ENCODE measurements at regions of chr3 and their contacts with region 1.

Region 1: GRCh38 chr3:188749010-188749617 is 422.7 kb upstream of the TPRG1 start:
- DNase-seq: peak; percentile 56
- H3K4me3 Mint-ChIP-seq: no peak overlapping the region
- H3K27ac Mint-ChIP-seq: no peak overlapping the region
- H3K4me1 Mint-ChIP-seq: peaks cover 29% of the 10 kb centered on the region
- H3K27me3 Mint-ChIP-seq: no peaks in the 10 kb centered on the region

Region 2: GRCh38 chr3:188389711-188390342 is 359.3 kb before region 1 on chr3:
- CTCF ChIA-PET with region 1: no interaction called
- POLR2A ChIA-PET with region 1: no interaction called
- intact Hi-C with region 1: loop called (anchors 10 kb)
- DNase-seq: peak; percentile 74
- H3K4me3 Mint-ChIP-seq: no peak overlapping the region
- H3K27ac Mint-ChIP-seq: peak overlapping the region; percentile 50
- H3K4me1 Mint-ChIP-seq: peaks cover 27% of the 10 kb centered on the region
- H3K27me3 Mint-ChIP-seq: no peaks in the 10 kb centered on the region

Region 3: DNA sequence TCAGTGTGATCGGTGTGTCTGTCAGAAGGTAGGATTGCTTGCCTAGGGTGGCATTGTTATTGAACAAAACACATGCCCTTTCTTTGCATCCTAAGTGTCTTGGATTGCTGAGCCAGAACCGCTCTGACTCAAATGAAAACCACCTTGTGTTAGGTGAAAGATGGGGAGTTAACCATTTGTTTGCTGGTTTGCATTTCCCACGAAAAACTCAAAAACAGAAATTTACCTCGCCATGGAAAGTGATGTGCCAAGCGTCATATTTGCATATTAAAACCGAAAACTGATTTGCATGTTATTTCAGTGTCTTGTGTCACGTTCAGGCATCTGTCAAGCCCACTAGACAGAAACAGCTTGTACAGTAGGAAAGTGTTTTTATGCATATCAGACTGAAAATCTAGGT is 52.0 kb before region 1 on chr3:
- CTCF ChIA-PET with region 1: interaction called, 6 read pairs
- POLR2A ChIA-PET with region 1: no interaction called
- intact Hi-C with region 1: loop called (anchors 1 kb)
- DNase-seq: peak; percentile 55
- H3K4me3 Mint-ChIP-seq: no peak overlapping the region
- H3K27ac Mint-ChIP-seq: peak overlapping the region; percentile 7
- H3K4me1 Mint-ChIP-seq: peaks cover 50% of the 10 kb centered on the region
- H3K27me3 Mint-ChIP-seq: peaks cover 7% of the 10 kb centered on the region

Region 4: DNA sequence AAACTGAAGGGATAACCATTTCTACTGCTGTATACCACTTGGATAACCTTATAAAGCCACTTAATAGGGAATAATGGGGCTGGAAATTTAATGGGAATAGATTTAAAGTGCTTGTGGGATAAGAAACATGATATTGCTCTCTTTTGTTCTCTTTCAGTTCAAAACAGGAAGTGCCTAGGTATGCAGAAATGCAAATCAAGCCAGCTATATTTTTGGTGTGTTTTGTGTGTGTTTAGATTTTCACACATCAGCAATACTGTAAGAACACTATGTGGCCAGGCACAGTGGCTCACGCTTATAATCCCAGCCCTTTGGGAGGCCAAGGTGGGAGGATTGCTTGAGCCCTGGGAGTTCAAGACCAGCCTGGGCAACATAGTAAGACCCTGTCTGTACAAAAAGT is 19.7 kb before region 1 on chr3:
- CTCF ChIA-PET with region 1: interaction called, 10 read pairs
- POLR2A ChIA-PET with region 1: interaction called, 4 read pairs
- intact Hi-C with region 1: loop called (anchors 1 kb)
- DNase-seq: no peak
- H3K4me3 Mint-ChIP-seq: no peak overlapping the region
- H3K27ac Mint-ChIP-seq: no peak overlapping the region
- H3K4me1 Mint-ChIP-seq: peaks cover 29% of the 10 kb centered on the region
- H3K27me3 Mint-ChIP-seq: peaks cover 15% of the 10 kb centered on the region